Prostate gland (tissue), 2 donors: ENCODE measurements at regions of chr19 and their contacts with region 1.

Region 1: DNA sequence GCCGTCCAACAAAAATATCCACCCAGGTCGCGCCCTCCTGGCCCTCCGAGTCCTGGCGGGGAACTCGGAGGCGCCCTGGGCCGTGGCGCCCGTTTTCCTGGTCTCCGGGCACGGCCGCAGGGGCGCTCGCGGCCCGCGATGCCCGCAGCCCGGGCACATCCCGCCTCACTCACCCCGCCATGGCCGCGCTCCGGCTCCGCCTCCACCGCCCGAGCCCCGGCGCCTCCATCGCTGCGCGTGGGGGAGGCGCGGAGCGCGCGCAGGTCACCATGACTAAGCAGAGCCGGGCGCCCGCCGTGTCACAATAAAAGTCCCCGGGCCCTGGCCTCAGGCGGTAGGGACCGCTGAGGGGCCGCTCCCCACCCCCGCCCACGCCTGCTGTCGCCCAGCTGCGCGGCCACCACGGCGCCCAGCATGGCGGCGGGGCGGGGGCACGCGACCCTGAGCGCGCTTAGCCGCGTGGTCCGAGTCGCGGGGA is 593 bp downstream of the KEAP1 start:
- DNase-seq: peak; percentile 85
- H3K4me3 ChIP-seq: peak overlapping the region; percentile 98 to 99
- H3K27ac ChIP-seq: peak overlapping the region; percentile 98
- H3K4me1 ChIP-seq: no peaks in the 10 kb centered on the region
- H3K27me3 ChIP-seq: no peaks in the 10 kb centered on the region
- CTCF ChIP-seq: peak in 1 of 4 experiments; percentile 4
- POLR2A ChIP-seq: peak; percentile 70

Region 2: GRCh38 chr19:10424011-10424637 is 78.4 kb before region 1 on chr19:
- intact Hi-C with region 1: no loop called
- DNase-seq: peak; percentile 62
- H3K4me3 ChIP-seq: peak overlapping the region; percentile 13 to 20
- H3K27ac ChIP-seq: peak overlapping the region in 1 of 2 donors; percentile 33
- H3K4me1 ChIP-seq: peaks cover 11% of the 10 kb centered on the region
- H3K27me3 ChIP-seq: peaks cover 21% of the 10 kb centered on the region
- CTCF ChIP-seq: peak; percentile 67 to 86 (median 72)
- POLR2A ChIP-seq: no peak

Region 3: DNA sequence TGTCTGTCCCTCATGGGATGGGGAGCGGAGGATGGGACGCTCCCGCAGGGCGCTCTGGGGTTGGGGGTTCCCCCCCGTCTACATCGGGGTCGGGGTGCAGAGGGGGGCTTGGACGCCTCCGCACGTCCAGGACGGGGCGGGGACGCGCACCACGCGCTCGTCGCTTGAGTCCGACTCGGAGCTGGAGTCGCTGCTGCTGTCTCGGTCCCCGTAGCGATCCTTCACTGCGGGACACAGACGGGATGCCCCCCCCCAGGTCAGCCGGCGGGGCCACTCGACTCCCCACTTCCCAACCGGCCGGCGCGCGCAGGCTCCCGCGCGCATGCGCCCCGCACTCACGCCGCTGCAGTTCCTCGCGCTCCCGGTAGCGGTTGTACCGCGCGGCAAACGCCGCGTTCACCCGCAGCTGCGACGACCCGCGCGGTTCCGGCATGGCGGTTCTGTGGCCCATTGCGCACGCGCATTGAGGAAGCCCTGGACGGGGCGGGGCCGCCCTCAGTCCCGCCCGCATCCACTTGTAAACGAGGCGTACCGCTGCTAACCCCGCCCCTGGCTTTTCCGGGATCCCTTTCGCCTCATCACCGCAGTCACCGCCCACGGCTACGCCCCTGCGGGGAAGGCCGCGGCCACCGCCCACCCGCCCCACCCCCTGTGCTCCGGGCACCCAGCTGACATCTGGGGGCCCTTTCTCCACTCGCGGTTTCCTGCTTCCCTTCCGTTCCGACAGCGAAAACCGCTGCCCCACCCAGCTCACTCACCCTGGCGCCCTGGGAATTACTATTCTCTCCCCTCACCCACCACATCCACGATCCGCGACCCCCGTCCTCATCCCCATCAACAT is 63.2 kb after region 1 on chr19 and contains the start of gene KRI1:
- intact Hi-C with region 1: loop called (anchors 5 kb)
- DNase-seq: peak; percentile 97
- H3K4me3 ChIP-seq: peak within 1 kb of the TSS; percentile 81 to 92
- H3K27ac ChIP-seq: peak within 1 kb of the TSS; percentile 83 to 86
- H3K4me1 ChIP-seq: peaks cover 16% of the 10 kb centered on the region
- H3K27me3 ChIP-seq: no peaks in the 10 kb centered on the region
- CTCF ChIP-seq: peak in 2 of 4 experiments; percentile 58 to 66
- POLR2A ChIP-seq: peak; percentile 97
- total RNA-seq, gene KRI1: 23.6 to 23.8 TPM